Common myeloid progenitor, CD34-positive (primary cell): ENCODE measurements at regions of chr1 and their contacts with region 1.

Region 1: DNA sequence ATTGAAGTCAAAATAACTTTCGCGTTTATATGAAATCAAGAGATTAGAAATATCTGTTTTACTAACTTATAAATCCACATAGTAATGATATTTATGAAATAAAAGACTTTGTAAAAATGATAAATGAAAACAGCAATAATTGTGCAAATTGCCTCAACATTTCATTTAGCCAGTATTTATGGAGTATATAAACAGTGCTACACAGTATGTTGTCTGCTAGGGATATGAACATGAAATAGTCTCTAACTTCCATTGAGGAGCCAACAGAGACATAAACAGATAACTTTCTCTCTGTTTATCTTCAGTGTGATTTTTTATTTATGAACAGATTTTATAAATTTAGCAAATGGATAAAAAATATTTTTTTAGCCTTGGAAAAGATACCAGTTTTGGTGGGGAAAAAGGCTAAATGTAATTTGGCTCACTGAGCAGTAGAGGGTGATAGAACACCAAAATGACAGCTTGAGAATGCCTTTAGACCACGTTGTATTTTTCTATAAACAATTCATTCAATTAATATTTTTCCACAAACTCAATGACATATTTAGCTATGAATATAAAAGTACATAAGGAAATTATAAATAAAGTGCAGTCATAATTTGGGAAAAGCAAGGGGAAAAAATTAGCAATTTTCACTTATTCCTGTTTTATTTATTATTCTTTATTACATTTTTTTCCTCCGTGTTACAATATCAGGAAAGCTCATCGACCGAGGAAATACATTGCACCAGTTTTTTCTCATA is 47.5 kb upstream of the EEIG2 start:
- DNase-seq: peak; percentile 51 to 74 (median 62)
- H3K4me3 ChIP-seq: no peak overlapping the region
- H3K27ac ChIP-seq: no peak overlapping the region
- H3K4me1 ChIP-seq: no peaks in the 10 kb centered on the region
- H3K27me3 ChIP-seq: peaks cover 0 to 10% (median 5%) of the 10 kb centered on the region in 5 experiments

Region 2: DNA sequence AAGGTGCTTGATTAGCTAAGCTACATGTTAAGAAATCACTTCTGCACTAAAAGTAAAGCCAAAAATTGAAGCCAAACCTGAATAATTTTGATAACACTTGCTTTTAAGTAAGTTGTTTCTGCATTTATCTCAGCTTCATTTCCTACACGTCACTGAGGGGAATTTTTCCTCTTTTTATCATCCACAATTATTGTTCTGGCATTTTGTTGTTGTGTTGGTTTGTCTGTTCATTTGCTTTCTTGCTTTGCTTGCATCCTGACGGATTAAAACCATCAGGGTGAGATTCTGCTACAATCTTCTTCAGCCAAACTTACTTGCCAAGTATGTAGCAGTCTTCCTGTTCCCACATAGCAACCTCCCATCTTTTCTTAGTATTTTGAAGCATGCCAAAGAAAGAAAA is 29.5 kb after region 1 on chr1:
- CTCF ChIA-PET with region 1: interaction called, 10 read pairs
- POLR2A ChIA-PET with region 1: no interaction called
- DNase-seq: no peak
- H3K4me3 ChIP-seq: no peak overlapping the region
- H3K27ac ChIP-seq: no peak overlapping the region
- H3K4me1 ChIP-seq: peaks cover 0 to 21% (median 6%) of the 10 kb centered on the region in 4 experiments
- H3K27me3 ChIP-seq: no peaks in the 10 kb centered on the region

Region 3: GRCh38 chr1:108615544-108615943 is 103.1 kb after region 1 on chr1:
- CTCF ChIA-PET with region 1: interaction called, 18 read pairs
- POLR2A ChIA-PET with region 1: no interaction called
- DNase-seq: no peak
- H3K4me3 ChIP-seq: no peak overlapping the region
- H3K27ac ChIP-seq: no peak overlapping the region
- H3K4me1 ChIP-seq: no peaks in the 10 kb centered on the region
- H3K27me3 ChIP-seq: no peaks in the 10 kb centered on the region

Region 4: DNA sequence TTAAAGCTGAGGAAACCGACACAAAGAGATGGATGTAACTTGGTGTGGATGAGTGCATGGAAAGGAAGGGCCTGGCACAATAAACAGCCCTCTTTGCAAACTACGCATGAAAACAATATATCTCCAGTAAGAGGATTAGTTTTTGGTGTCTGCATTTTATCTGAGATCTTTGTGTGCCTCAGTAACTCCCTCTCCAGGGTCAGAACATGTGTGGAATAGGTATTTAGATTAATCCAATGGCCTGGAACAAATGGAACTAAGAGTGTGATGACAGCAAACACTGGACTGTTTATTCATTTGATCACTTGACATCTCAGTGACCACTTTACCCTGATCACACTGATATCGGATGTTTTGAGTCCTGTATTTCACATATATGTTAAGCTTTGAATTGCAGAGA is 299.2 kb after region 1 on chr1:
- CTCF ChIA-PET with region 1: no interaction called
- POLR2A ChIA-PET with region 1: no interaction called
- DNase-seq: no peak
- H3K4me3 ChIP-seq: no peak overlapping the region
- H3K27ac ChIP-seq: no peak overlapping the region
- H3K4me1 ChIP-seq: peaks cover 0 to 7% (median 4%) of the 10 kb centered on the region in 4 experiments
- H3K27me3 ChIP-seq: no peaks in the 10 kb centered on the region